GM10248 (cell line): ENCODE measurements at regions of chr11 and their contacts with region 1.

Region 1: DNA sequence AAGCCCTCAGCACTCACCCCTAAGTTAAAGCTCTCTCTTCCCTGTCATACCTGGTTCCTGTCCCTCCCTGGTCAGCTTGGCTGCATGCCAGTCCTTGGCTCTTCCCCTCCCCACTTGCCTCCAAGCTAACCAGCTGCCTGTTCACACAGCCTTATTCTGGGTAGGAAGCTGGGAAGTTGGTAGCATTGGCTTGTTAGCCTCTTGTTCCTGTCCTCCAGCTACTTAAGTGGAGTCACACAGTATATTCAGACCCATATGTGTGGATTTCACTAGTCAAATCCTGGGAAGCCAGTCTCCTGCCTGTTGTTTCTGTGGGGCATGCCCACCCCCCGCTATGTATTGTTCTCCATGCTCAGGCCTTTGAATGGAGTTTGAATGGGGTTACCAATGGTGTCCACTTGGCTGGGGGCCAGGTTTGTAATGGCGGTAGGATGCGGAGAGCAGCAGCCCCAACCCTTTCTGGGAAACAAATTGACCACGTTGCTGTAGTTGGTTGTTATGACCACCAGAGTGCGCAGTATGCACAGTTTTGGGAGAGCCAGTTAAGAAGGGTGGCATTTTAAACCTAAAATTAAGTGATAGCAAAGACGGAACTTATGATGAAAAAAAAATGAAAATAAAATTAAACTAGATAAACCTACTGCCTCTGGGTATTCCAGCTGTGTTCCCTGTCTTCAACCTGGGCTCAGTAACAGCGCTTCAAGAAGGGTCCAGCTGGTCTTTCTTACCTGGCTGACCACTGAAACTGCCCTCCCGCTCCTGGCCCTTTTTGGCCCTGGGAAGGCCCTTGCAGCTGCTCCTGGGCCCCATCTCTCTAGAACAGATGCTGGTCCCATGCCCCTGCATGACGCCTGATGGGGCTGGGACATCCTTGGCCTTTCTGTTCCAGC is 10.7 kb upstream of the RPS3 start:
- DNase-seq: peak; percentile 75
- CTCF ChIP-seq: peak; percentile 80

Region 2: GRCh38 chr11:75328426-75329277 is 60.0 kb before region 1 on chr11:
- CTCF ChIA-PET with region 1: interaction called, 10 read pairs
- POLR2A ChIA-PET with region 1: no interaction called
- DNase-seq: no peak
- CTCF ChIP-seq: peak; percentile 60

Region 3: DNA sequence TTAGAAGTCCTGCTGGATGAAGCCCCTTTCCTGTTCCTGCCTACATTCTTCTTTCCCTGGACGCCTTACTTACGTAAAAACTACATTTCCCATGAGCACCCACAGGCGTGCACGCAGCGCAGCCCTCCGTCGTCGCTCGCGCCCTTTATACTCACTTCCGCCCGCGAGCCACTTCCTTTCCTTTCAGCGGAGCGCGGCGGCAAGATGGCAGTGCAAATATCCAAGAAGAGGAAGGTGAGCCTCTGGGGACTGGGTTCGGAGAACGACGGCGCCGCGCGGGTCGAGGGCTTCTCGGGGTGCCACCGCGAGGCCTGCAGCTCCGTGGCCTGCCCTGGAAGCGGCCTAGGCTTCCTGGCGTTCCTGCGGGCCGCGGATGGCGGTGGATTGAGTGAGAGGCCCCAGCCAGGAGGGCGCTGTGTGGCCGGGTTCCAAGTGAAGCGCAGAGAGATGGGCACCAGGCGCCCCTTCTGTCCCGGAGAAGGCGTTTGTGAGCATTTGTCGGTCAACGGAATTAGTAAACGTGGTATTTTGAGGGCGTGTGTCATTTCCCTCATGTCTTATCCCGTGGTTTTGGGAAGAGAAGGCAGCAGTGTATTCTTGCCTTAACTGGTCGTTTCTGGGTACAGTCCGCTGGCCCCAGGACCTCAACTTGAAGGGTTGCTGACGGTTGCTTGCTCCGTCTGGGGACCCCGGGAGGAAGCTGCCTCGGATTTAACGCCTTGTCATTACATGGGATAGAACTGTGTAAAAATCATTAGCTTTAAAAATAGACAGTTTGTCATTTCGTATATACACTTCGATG is 10.9 kb after region 1 on chr11 and contains the start of gene RPS3:
- CTCF ChIA-PET with region 1: interaction called, 17 read pairs
- POLR2A ChIA-PET with region 1: interaction called, 3 read pairs
- DNase-seq: peak; percentile 93
- CTCF ChIP-seq: peak; percentile 13

Region 4: GRCh38 chr11:75428281-75428724 is 39.7 kb after region 1 on chr11:
- CTCF ChIA-PET with region 1: interaction called, 12 read pairs
- POLR2A ChIA-PET with region 1: no interaction called
- DNase-seq: peak; percentile 88
- CTCF ChIP-seq: no peak

Region 5: GRCh38 chr11:75525596-75526541 is 137.2 kb after region 1 on chr11 and contains the start of gene GDPD5:
- CTCF ChIA-PET with region 1: interaction called, 127 read pairs
- POLR2A ChIA-PET with region 1: no interaction called
- DNase-seq: peak; percentile 96
- CTCF ChIP-seq: peak; percentile 79